Activated naive CD4-positive, alpha-beta T cell treated with anti-CD3 and anti-CD28 coated beads for 36 hours (primary cell): ENCODE measurements at regions of chr1 and their contacts with region 1.

Region 1: GRCh38 chr1:46036894-46037839 is 95.3 kb downstream of the PIK3R3 start:
- DNase-seq: peak; percentile 91
- H3K4me3 Mint-ChIP-seq: no peak overlapping the region
- H3K27ac Mint-ChIP-seq: no peak overlapping the region
- H3K4me1 Mint-ChIP-seq: no peaks in the 10 kb centered on the region
- H3K27me3 Mint-ChIP-seq: no peaks in the 10 kb centered on the region

Region 2: DNA sequence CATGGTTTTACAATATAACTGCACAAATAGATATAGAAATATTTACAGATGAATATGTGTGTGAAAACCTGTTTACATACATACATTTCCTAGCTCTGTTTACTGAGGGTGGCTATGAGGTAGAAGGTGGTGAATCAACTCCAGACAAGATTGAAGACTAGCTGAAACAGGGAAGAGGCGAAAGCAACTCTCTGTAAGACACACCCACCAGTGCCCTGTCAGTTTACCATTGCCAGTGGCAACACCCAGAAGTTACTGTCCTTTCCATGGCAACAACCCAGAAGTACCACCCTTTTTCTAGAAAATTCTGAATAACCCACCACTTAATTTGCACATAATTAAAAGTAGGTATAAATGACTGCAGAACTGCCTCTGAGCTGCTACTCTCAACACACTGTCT is 332.5 kb before region 1 on chr1:
- CTCF ChIA-PET with region 1: no interaction called
- intact Hi-C with region 1: no loop called
- DNase-seq: no peak
- H3K4me3 Mint-ChIP-seq: no peak overlapping the region
- H3K27ac Mint-ChIP-seq: no peak overlapping the region
- H3K4me1 Mint-ChIP-seq: no peaks in the 10 kb centered on the region
- H3K27me3 Mint-ChIP-seq: no peaks in the 10 kb centered on the region

Region 3: DNA sequence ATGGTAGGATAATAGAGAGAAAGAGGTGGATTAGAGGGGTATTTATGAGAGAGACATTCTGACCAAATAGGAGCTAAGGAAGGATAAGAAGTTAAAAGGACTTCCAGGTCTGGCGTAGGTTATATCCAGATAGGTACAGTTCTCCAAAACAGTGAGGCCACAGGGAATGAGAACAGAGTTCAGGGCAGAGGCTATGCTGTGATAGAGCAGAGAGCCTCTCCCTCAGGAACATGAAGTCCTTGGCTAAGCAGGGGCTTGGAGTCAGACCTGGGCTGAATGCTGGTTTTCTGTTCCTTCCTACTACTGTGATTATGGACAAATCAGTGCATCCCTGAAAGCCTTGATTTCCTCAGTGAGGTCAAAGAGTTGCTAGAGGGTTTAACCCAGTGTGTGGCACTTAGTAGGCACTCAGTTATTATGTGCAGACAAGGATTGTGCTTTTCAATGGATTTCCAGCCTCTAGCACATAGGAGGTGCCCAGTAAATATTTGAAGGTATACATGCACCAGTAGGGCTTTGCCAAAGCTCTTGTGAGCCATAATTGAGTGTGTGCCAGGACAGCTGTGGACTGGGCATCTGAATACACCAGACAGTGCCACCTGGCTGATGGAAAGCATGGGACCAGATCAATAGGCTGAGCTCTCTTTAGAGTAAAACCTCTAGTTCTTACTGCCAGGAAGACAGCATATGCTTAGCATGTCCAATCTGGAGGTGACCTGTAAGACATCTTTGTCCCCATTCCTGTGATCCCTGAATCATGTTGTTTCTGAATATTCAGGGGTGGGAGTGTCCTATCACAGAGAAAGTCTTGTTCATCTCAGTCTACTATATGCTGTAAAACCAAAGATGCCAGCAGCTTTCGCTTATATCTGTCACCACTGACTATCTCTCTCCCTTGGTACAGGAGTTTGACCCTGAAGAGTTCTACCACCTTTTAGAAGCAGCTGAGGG is 15.8 kb before region 1 on chr1:
- CTCF ChIA-PET with region 1: interaction called, 10 read pairs
- intact Hi-C with region 1: no loop called
- DNase-seq: peak; percentile 15
- H3K4me3 Mint-ChIP-seq: no peak overlapping the region
- H3K27ac Mint-ChIP-seq: no peak overlapping the region
- H3K4me1 Mint-ChIP-seq: no peaks in the 10 kb centered on the region
- H3K27me3 Mint-ChIP-seq: no peaks in the 10 kb centered on the region

Region 4: GRCh38 chr1:46179138-46180081 is 142.2 kb after region 1 on chr1:
- CTCF ChIA-PET with region 1: interaction called, 98 read pairs
- intact Hi-C with region 1: loop called (anchors 1 kb)
- DNase-seq: peak; percentile 82
- H3K4me3 Mint-ChIP-seq: no peak overlapping the region
- H3K27ac Mint-ChIP-seq: no peak overlapping the region
- H3K4me1 Mint-ChIP-seq: peaks cover 8% of the 10 kb centered on the region
- H3K27me3 Mint-ChIP-seq: no peaks in the 10 kb centered on the region